ENCODE measurements at regions of chr12 and their contacts with region 1.

Region 1: DNA sequence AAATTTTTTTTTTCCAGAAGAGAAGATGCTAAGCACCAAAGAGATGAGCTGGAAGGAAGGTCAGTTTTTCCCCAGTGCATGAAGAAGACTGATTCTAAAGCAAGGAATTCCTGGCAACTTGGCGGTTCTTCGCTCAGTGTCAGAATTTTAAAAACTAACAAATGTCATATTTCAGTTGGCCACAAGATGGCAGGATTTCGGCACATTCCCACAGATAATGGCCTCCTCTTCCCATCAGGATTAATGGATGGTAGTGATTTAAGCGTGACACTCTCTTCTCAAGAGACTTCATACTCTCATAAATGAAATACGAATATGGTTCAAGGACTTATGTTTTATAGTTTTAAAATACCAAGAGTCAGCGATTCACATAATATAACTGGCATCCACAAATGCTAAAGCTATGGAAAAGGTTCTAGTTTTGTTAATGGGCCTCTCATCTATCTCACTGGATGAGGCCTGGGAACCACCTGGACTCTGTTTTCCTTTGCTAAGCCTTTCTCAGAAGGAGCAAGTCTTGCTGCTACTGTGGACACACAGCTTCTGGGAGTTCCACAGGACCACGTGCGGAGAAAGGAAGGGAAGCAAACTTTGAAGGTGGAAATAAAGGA is 46.1 kb upstream of the PTPRO start:
- DNase-seq: peak in 1 of 2 donors; percentile 35
- ATAC-seq: peak in 4 of 8 donors; percentile 21 to 42 (median 36)
- H3K4me3 ChIP-seq: no peak overlapping the region
- H3K27ac ChIP-seq: no peak overlapping the region
- H3K4me1 ChIP-seq: peaks cover 0 to 20% (median 15%) of the 10 kb centered on the region in 9 donors
- H3K27me3 ChIP-seq: peaks cover 0 to 6% (median 0%) of the 10 kb centered on the region in 7 donors
- CTCF ChIP-seq: peak; percentile 62 to 84 (median 75)

Region 2: DNA sequence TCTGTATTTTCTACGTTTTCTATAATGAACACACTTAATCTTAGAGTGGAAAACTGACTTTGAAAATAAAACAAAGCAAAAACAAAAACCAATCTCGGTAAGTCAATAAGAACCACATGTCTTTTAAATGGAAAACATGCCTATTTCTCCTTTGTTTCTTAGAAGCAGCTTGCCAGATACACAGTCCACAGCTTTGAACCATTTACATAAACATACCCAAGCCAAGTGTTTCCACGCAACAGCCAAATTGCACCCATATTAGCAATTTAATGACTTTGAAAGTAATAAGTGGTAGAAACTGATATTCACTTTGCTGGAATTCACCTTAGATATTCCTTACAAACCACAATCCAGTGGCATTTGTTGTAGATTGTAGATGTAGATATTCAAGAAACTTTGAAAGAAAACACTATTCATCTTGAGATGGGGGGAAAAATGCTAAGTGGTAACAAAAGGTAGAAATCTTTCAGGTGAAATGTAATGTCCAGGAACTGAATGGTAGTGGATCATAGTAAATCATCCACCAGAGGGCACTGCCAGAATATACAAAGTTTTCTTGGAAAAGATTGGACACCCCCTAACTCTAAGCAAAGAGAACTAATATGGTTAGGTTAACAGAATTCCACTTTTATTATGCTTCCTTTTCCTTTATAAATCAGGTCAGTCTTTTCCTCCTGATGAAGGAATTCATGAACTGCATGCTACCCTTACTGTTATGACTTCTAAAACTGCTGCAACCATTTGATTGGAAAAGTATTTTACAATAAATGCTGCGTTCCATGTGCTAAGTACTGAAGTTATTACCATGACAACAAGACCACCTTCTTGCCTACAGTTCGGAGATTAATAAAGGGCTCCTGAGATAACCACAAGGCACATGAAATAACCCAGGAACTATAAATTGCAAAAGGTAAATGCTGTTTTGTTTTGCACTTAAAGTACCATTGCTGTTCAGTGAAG is 124.8 kb before region 1 on chr12:
- intact Hi-C with region 1: loop called in 1 of 10 experiments (anchors 5 kb)
- DNase-seq: peak in 1 of 2 donors; percentile 32
- ATAC-seq: peak in 7 of 8 donors; percentile 44 to 88 (median 71)
- H3K4me3 ChIP-seq: no peak overlapping the region
- H3K27ac ChIP-seq: peak overlapping the region in 4 of 10 donors; percentile 32 to 48 (median 42)
- H3K4me1 ChIP-seq: peaks cover 0 to 23% (median 13%) of the 10 kb centered on the region in 9 donors
- H3K27me3 ChIP-seq: peaks cover 0 to 8% (median 0%) of the 10 kb centered on the region in 7 donors
- CTCF ChIP-seq: peak in 8 of 9 donors; percentile 38 to 66 (median 52)

Region 3: DNA sequence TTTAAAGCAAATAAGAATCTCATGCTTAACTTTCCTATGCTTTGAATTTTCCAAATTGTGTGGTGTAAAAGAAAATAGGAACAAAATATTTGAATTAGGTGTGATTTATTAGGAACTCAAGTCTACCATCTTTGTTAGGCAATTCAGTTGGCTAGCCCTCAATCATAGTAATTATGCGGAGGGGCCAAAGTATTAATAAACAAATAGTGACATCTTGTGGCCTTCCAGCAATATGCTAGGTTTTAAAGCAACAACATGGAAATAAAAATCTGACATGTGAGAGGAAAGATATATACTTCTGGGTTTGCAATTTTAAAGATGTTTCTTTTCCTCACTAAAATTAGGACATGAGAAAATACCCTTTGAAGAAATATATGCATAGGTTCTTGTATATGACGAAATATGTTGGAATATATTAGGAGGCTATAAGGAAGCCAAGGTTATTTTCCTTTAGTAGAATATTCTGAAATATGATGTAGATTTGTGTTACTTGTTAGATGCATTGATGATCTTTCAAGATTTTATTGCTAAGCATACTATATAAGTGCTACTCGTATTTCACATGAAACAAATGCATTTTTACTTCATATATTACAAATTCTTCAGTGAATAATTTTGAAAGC is 246.5 kb after region 1 on chr12:
- intact Hi-C with region 1: loop called (anchors 2 to 10 kb)
- DNase-seq: no peak
- ATAC-seq: peak in 1 of 8 donors; percentile 62
- H3K4me3 ChIP-seq: no peak overlapping the region
- H3K27ac ChIP-seq: no peak overlapping the region
- H3K4me1 ChIP-seq: no peaks in the 10 kb centered on the region
- H3K27me3 ChIP-seq: peaks cover 0 to 57% (median 21%) of the 10 kb centered on the region in 7 donors
- CTCF ChIP-seq: peak in 8 of 9 donors; percentile 23 to 70 (median 62)

Region 4: DNA sequence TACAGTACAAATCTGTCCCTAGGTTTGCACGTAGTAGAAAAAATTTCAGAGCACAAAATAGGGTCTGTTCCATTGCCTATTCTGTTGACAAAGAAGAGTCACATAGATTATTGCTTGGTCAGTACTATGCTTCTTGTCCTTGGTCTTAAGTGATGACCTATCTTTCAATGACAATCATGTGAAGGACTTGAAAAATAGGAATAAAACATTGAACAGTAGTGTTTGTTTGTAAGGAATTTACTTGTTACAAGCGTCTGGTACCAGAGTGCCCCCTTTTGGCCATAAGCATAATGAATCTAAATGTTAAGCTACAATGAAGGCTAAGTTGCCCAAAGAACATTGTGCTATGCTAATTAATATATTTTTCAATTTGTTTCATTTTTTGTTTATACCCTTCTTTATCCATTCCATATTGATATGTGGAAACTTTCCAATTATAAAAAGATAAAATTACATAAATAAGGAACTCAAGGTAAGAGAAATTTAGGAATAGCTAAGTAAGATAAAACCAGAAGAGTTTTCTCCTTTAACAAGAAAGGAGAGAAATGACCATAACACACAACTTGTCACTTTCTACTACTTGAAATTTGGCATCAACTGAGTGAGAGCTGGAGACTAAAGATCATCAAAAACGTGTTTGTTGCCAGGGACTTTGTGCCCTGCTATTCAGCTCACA is 308.3 kb after region 1 on chr12:
- intact Hi-C with region 1: loop called in 9 of 10 experiments (anchors 1 to 10 kb)
- DNase-seq: no peak
- ATAC-seq: peak in 1 of 8 donors; percentile 22
- H3K4me3 ChIP-seq: no peak overlapping the region
- H3K27ac ChIP-seq: no peak overlapping the region
- H3K4me1 ChIP-seq: no peaks in the 10 kb centered on the region
- H3K27me3 ChIP-seq: peaks cover 0 to 23% (median 0%) of the 10 kb centered on the region in 7 donors
- CTCF ChIP-seq: peak; percentile 36 to 80 (median 69)

Region 5: DNA sequence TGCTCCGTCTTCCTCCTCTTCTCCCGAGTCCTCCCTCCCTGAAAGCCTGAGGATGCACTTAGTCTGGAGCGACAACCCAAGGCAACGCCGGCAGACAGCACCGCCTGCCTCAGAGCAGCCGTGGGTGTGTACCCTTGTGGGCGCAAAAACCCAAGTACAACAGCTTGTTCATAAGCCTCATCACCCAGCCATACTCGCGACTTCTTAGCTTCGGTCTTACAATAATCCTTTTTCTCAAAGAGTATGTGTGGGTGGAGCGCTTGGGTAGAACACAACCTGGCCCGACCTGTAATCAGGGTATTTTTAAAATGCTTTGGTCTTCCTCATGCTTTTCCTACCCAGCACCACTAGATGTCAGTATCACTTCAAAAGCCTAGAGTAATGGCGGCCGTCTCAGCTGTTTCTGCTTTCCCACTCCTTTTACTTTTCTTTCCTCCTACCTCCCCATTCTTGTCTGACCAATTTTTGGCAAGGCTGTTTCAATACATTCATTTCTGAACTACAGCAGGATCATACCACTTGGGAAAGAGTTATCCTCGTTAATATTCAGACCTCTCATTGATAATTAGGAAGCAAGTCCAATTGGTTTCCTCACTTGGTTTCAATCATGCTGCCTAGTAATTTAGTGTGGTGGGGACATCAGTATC is 314.1 kb after region 1 on chr12:
- intact Hi-C with region 1: loop called in 7 of 10 experiments (anchors 2 to 10 kb)
- DNase-seq: peak in 1 of 2 donors; percentile 54
- ATAC-seq: peak; percentile 70 to 92 (median 82)
- H3K4me3 ChIP-seq: peak overlapping the region in 7 of 10 donors; percentile 1 to 45 (median 31)
- H3K27ac ChIP-seq: peak overlapping the region in 8 of 10 donors; percentile 19 to 64 (median 44)
- H3K4me1 ChIP-seq: peaks cover 0 to 11% (median 4%) of the 10 kb centered on the region in 9 donors
- H3K27me3 ChIP-seq: peaks cover 0 to 11% (median 0%) of the 10 kb centered on the region in 7 donors
- CTCF ChIP-seq: peak; percentile 77 to 97 (median 89)

Region 6: GRCh38 chr12:15856097-15856982 is 580.1 kb after region 1 on chr12:
- intact Hi-C with region 1: loop called in 8 of 10 experiments (anchors 5 to 10 kb)
- DNase-seq: peak in 1 of 2 donors; percentile 62
- ATAC-seq: peak in 6 of 8 donors; percentile 57 to 77 (median 72)
- H3K4me3 ChIP-seq: no peak overlapping the region
- H3K27ac ChIP-seq: peak overlapping the region in 3 of 10 donors; percentile 1 to 48 (median 23)
- H3K4me1 ChIP-seq: peaks cover 0 to 3% (median 0%) of the 10 kb centered on the region in 9 donors
- H3K27me3 ChIP-seq: peaks cover 0 to 13% (median 5%) of the 10 kb centered on the region in 7 donors
- CTCF ChIP-seq: peak; percentile 64 to 96 (median 83)

Region 7: GRCh38 chr12:15868186-15868585 is 592.0 kb after region 1 on chr12:
- intact Hi-C with region 1: loop called in 1 of 10 experiments (anchors 5 kb)
- DNase-seq: no peak
- ATAC-seq: no peak
- H3K4me3 ChIP-seq: no peak overlapping the region
- H3K27ac ChIP-seq: no peak overlapping the region
- H3K4me1 ChIP-seq: no peaks in the 10 kb centered on the region
- H3K27me3 ChIP-seq: peaks cover 0 to 3% (median 0%) of the 10 kb centered on the region in 7 donors
- CTCF ChIP-seq: no peak

Region 8: DNA sequence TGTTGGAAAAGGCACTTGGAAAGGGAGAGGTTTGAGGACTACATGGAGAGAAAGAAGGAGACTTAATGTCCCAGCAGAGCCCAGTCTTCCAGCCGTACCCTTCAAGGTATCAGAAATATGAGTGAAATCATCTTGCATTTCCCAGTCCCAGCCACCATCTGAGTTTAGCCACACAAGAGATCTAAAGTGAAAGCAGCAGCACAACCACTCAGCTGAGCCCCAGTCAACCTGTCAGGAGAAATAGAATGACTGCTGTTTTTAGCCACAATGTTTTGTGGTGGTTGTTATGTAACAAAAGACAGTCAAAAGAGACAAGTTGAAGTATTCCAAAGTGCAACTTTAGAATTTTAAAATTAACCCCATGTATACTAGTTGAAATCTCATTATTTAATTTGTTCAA is 662.9 kb after region 1 on chr12:
- intact Hi-C with region 1: no loop called
- DNase-seq: no peak
- ATAC-seq: no peak
- H3K4me3 ChIP-seq: no peak overlapping the region
- H3K27ac ChIP-seq: no peak overlapping the region
- H3K4me1 ChIP-seq: no peaks in the 10 kb centered on the region
- H3K27me3 ChIP-seq: no peaks in the 10 kb centered on the region
- CTCF ChIP-seq: no peak

Measured in heart right ventricle (tissue), 16 donors.